Activated CD4-positive, alpha-beta T cell treated with anti-CD3 and anti-CD28 coated beads, Interleukin-2, amount 10 ng/mL, durations not matched to agents 24 days and 14 days (primary cell): ENCODE measurements at regions of chr4 and their contacts with region 1.

Region 1: GRCh38 chr4:67545199-67546003 is at the start of gene CENPC:
- DNase-seq: peak; percentile 98
- H3K4me3 Mint-ChIP-seq: peak within 1 kb of the TSS; percentile 99
- H3K27ac Mint-ChIP-seq: peak within 1 kb of the TSS; percentile 99
- H3K4me1 Mint-ChIP-seq: peaks cover 30% of the 10 kb centered on the region
- H3K27me3 Mint-ChIP-seq: no peaks in the 10 kb centered on the region
- total RNA-seq, gene CENPC: 25.7 and 28.3 TPM in 2 replicates

Region 2: GRCh38 chr4:67522851-67523671 is 22.3 kb before region 1 on chr4:
- intact Hi-C with region 1: loop called (anchors 1 kb)
- DNase-seq: peak; percentile 69
- H3K4me3 Mint-ChIP-seq: peak overlapping the region; percentile 66
- H3K27ac Mint-ChIP-seq: peak overlapping the region; percentile 97
- H3K4me1 Mint-ChIP-seq: peaks cover 55% of the 10 kb centered on the region
- H3K27me3 Mint-ChIP-seq: no peaks in the 10 kb centered on the region

Region 3: DNA sequence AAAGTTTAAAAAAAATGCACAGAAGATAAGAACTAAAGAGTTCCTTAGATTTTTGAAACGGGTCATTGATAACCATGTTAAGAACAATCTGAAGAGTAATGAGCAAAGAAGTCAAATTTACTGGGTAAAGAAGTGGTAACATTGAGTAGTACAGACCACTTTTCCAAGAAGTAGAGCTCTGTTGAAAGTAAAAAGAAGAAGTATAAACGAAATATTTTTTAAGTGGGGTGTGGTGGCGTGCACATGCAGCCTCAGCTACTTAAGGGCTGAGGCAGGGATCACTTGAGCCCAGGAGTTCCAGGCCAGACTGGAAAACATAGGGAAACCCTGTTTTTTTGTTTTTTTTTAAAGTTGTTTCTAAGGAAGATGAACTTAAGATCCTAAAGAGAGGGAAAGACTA is 87.1 kb after region 1 on chr4:
- intact Hi-C with region 1: loop called (anchors 5 kb)
- DNase-seq: peak; percentile 64
- H3K4me3 Mint-ChIP-seq: peak overlapping the region; percentile 82
- H3K27ac Mint-ChIP-seq: peak overlapping the region; percentile 88
- H3K4me1 Mint-ChIP-seq: peaks cover 14% of the 10 kb centered on the region
- H3K27me3 Mint-ChIP-seq: no peaks in the 10 kb centered on the region

Region 4: DNA sequence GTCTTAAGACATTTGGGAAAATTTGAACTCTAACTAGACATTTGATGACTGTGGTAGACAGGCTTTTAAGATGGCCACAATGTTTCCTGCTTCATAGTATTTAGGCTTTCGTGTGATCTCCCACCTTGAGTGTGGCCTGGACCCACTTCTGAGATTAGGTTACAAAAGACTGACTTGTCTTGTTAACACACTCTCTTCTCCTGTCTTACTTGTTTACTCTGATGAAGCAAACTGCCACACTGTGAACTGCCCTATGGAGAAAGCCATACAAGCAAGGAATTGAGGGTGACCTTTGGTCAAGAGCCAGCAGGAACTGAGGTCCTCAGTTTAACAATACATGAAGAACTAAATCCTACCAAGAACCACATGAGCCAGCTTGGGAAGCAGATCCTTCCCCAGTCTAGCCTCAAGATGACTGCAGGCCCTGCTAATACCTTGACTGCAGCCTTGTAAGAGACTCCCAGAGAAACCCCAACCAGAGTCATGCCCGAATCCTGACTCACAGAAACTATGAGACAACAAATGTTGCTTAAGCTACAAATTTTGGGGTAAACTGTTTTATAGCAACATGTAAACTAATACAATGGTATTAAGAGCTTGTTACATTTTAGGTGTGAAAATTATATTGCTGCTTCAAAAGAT is 135.3 kb after region 1 on chr4:
- intact Hi-C with region 1: no loop called
- DNase-seq: no peak
- H3K4me3 Mint-ChIP-seq: no peak overlapping the region
- H3K27ac Mint-ChIP-seq: peak overlapping the region; percentile 20
- H3K4me1 Mint-ChIP-seq: peaks cover 24% of the 10 kb centered on the region
- H3K27me3 Mint-ChIP-seq: no peaks in the 10 kb centered on the region

Region 5: GRCh38 chr4:67700738-67701516 is 155.5 kb after region 1 on chr4 and contains the start of gene UBA6:
- intact Hi-C with region 1: loop called (anchors 1 kb)
- DNase-seq: peak; percentile 98
- H3K4me3 Mint-ChIP-seq: peak within 1 kb of the TSS; percentile 96
- H3K27ac Mint-ChIP-seq: peak within 1 kb of the TSS; percentile 97
- H3K4me1 Mint-ChIP-seq: peaks cover 46% of the 10 kb centered on the region
- H3K27me3 Mint-ChIP-seq: no peaks in the 10 kb centered on the region
- total RNA-seq, gene UBA6: 78.2 and 85.4 TPM in 2 replicates

Region 6: GRCh38 chr4:67746797-67747495 is 201.5 kb after region 1 on chr4:
- intact Hi-C with region 1: loop called (anchors 2 kb)
- DNase-seq: no peak
- H3K4me3 Mint-ChIP-seq: no peak overlapping the region
- H3K27ac Mint-ChIP-seq: no peak overlapping the region
- H3K4me1 Mint-ChIP-seq: peaks cover 16% of the 10 kb centered on the region
- H3K27me3 Mint-ChIP-seq: no peaks in the 10 kb centered on the region

Region 7: DNA sequence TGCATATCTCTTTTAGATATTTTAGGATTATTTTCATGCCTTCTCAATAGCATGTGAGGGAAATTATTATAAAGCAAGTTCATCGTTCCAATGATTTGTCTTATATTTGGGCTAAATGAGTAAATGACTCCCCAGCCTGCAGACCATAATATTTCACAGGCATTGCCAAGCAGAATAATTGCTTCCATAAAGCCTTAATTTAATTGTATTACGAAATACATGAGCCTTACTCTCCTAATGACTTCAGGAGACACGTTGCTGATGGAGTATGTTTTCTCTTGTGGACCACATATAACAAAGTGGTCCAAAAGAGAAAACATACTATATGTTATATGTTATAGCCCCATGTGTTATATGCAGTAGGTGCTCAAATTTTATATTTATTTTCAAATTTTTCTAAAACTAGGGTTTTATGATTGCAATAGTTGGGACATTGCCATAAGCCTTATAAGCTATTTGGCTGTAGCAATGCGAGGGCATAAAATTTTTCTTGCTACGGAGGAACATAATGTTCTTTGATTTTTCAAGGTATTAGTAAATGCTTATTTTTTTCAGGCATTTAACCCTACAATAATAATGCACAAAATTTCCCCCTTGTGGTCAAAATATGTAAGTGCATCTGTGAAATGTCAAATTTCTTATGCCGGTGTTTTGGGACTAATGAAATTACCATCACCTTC is 364.6 kb after region 1 on chr4:
- intact Hi-C with region 1: loop called (anchors 2 kb)
- DNase-seq: no peak
- H3K4me3 Mint-ChIP-seq: no peak overlapping the region
- H3K27ac Mint-ChIP-seq: no peak overlapping the region
- H3K4me1 Mint-ChIP-seq: no peaks in the 10 kb centered on the region
- H3K27me3 Mint-ChIP-seq: peaks cover 17% of the 10 kb centered on the region

Region 8: DNA sequence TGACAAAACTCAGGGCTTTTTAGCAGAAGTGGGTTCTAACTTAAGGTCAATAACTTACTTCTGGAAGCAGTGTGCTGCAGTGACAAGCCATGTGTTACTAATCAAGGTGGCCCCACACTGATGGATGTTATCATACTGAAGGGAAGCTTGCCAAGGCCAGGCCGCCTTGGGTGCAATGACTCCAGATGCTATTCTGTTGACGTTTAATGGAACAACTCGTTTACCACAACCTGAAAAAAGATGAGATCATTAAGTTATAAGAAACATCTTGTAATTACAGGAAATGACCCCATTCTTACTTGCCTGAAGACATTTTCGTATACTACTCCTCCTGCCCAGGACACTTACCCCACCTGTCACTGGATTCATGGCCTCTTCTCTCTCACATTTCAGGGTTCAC is 377.3 kb after region 1 on chr4:
- intact Hi-C with region 1: no loop called
- DNase-seq: no peak
- H3K4me3 Mint-ChIP-seq: no peak overlapping the region
- H3K27ac Mint-ChIP-seq: no peak overlapping the region
- H3K4me1 Mint-ChIP-seq: no peaks in the 10 kb centered on the region
- H3K27me3 Mint-ChIP-seq: peaks cover 12% of the 10 kb centered on the region

Region 9: GRCh38 chr4:68175562-68176155 is 630.3 kb after region 1 on chr4:
- intact Hi-C with region 1: loop called (anchors 5 kb)
- DNase-seq: peak; percentile 83
- H3K4me3 Mint-ChIP-seq: no peak overlapping the region
- H3K27ac Mint-ChIP-seq: no peak overlapping the region
- H3K4me1 Mint-ChIP-seq: peaks cover 1% of the 10 kb centered on the region
- H3K27me3 Mint-ChIP-seq: no peaks in the 10 kb centered on the region